ENCODE measurements at regions of chr1 and their contacts with region 1.

Region 1: GRCh38 chr1:9823943-9824701 is at the start of gene CLSTN1:
- DNase-seq: peak; percentile 84
- H3K4me3 Mint-ChIP-seq: peak within 1 kb of the TSS; percentile 91
- H3K27ac Mint-ChIP-seq: peak within 1 kb of the TSS; percentile 71
- H3K4me1 Mint-ChIP-seq: peaks cover 31% of the 10 kb centered on the region
- H3K27me3 Mint-ChIP-seq: no peaks in the 10 kb centered on the region
- CTCF ChIP-seq: no peak
- total RNA-seq, gene CLSTN1: 98.5 and 106 TPM in 2 replicates

Region 2: DNA sequence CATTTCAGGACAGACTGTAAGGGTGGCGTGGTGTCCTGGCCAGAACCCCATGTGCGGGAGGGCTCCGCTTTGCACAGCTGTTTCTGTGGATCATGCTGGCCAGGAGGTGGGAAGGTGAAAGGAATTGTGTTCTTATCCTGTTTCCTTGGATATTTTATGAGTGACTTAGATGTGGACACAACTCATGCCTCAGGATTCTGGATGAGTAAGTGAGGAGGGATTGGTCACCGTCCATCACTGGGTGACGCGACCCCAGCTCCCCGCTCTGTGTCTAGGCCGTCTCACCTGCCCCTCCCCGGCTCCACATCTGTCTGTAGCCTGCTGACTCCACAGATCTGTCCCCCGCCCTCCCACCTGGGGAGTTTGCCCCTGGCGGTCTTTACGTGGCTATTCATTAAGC is 123.8 kb before region 1 on chr1:
- CTCF ChIA-PET with region 1: no interaction called
- POLR2A ChIA-PET with region 1: no interaction called
- intact Hi-C with region 1: no loop called
- DNase-seq: peak; percentile 54
- H3K4me3 Mint-ChIP-seq: no peak overlapping the region
- H3K27ac Mint-ChIP-seq: peak overlapping the region; percentile 19
- H3K4me1 Mint-ChIP-seq: peaks cover 23% of the 10 kb centered on the region
- H3K27me3 Mint-ChIP-seq: no peaks in the 10 kb centered on the region
- CTCF ChIP-seq: no peak

Region 3: DNA sequence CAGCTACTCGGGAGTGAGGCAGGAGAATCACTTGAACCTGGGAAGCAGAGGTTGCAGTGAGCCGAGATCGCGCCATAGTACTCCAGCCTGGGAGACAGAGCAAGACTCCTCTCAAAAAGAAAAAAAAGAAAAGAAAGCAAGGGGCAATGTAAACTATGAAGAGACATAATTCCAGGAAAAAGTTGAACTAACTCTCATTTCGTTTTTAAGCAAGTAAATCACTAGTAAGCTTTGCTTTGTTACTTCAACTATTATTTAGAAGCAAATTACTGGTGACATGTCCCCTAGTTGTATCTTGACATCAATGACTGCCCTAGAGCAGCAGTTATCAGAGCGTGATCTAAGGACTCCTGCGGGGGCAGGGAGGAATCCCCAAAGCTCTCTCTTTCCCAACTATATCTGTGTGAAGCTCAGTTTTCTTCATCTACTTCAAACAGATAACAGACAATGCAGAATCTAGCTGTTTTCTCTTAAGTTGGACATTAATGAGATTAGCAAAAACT is 19.1 kb before region 1 on chr1:
- CTCF ChIA-PET with region 1: interaction called, 3 read pairs
- POLR2A ChIA-PET with region 1: interaction called, 41 read pairs
- intact Hi-C with region 1: no loop called
- DNase-seq: no peak
- H3K4me3 Mint-ChIP-seq: peak overlapping the region; percentile 16
- H3K27ac Mint-ChIP-seq: peak overlapping the region; percentile 89
- H3K4me1 Mint-ChIP-seq: peaks cover 23% of the 10 kb centered on the region
- H3K27me3 Mint-ChIP-seq: no peaks in the 10 kb centered on the region
- CTCF ChIP-seq: no peak

Region 4: GRCh38 chr1:9835758-9836450 is 11.8 kb after region 1 on chr1:
- CTCF ChIA-PET with region 1: interaction called, 5 read pairs
- POLR2A ChIA-PET with region 1: interaction called, 47 read pairs
- intact Hi-C with region 1: no loop called
- DNase-seq: peak; percentile 85
- H3K4me3 Mint-ChIP-seq: peak overlapping the region; percentile 58
- H3K27ac Mint-ChIP-seq: peak overlapping the region; percentile 91
- H3K4me1 Mint-ChIP-seq: peaks cover 31% of the 10 kb centered on the region
- H3K27me3 Mint-ChIP-seq: no peaks in the 10 kb centered on the region
- CTCF ChIP-seq: no peak

Region 5: GRCh38 chr1:9842781-9843577 is 18.9 kb after region 1 on chr1:
- CTCF ChIA-PET with region 1: no interaction called
- POLR2A ChIA-PET with region 1: interaction called, 12 read pairs
- intact Hi-C with region 1: no loop called
- DNase-seq: peak; percentile 44
- H3K4me3 Mint-ChIP-seq: no peak overlapping the region
- H3K27ac Mint-ChIP-seq: no peak overlapping the region
- H3K4me1 Mint-ChIP-seq: peaks cover 16% of the 10 kb centered on the region
- H3K27me3 Mint-ChIP-seq: no peaks in the 10 kb centered on the region
- CTCF ChIP-seq: no peak

Region 6: GRCh38 chr1:9867408-9868243 is 43.5 kb after region 1 on chr1:
- CTCF ChIA-PET with region 1: interaction called, 6 read pairs
- POLR2A ChIA-PET with region 1: interaction called, 4 read pairs
- intact Hi-C with region 1: loop called (anchors 2 kb)
- DNase-seq: peak; percentile 79
- H3K4me3 Mint-ChIP-seq: no peak overlapping the region
- H3K27ac Mint-ChIP-seq: no peak overlapping the region
- H3K4me1 Mint-ChIP-seq: peaks cover 7% of the 10 kb centered on the region
- H3K27me3 Mint-ChIP-seq: no peaks in the 10 kb centered on the region
- CTCF ChIP-seq: peak; percentile 93

Region 7: DNA sequence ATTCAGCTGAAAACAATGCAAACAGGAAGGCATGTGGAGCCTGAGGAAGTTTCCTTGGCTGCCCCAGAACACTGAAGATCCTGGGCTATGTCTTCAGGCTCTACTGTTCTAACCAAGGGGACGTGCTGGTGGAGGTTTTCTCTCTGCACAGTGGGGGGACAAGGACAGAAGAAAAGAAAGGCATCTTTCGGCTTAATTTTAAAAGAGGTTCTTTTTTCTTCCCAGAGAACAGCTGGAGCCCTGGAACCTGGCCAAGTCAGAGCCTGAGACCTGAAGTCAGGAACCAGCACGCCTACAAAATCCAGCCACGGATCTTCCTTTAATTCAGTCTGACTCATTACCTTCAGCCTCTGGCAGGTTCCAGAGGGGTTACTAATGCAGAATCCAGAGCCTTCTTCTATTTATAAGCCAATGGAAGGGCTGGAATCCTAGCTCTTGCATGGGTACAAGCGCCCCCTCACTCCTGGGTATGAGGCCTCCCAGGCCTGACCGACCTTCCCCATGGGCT is 66.2 kb after region 1 on chr1:
- CTCF ChIA-PET with region 1: interaction called, 5 read pairs
- POLR2A ChIA-PET with region 1: interaction called, 10 read pairs
- intact Hi-C with region 1: no loop called
- DNase-seq: peak; percentile 96
- H3K4me3 Mint-ChIP-seq: peak overlapping the region; percentile 59
- H3K27ac Mint-ChIP-seq: peak overlapping the region; percentile 81
- H3K4me1 Mint-ChIP-seq: peaks cover 42% of the 10 kb centered on the region
- H3K27me3 Mint-ChIP-seq: no peaks in the 10 kb centered on the region
- CTCF ChIP-seq: no peak

Region 8: DNA sequence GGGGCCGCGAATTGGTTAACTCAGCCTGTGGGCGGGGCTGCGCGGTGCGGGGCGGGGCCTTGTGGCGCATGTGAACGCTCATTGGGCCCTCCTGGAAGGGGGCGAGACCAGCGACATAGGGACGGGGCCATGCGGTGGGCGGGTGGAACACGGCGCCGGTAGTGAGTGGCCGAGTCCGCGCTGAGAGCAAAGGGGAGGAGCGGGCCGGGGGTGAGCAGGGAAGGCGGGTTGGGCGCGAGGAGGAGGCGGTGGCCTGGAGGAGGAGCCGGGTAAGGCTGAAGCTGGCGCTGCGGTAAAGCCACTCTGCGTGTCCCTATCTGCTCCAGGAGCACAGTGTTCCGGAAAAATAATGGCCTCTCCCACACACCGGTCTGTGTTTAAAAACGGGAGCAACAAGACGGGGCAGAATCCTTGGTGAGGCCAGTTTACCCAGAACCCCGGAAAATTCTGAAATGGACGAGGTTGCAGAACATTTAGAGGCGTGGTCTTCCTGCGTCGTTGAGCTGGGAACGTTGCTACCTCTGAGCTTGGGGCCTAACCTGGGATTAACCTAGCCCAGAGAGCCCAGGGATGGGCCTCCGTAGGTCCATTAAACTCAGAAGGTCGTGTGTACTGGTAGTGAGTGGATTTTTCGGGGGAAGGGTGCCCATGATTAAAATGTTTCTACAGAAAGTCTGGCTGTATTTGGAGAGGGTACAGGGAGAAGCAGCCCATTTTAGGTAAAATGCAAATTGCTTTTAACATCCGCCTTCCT is 86.5 kb after region 1 on chr1:
- CTCF ChIA-PET with region 1: interaction called, 3 read pairs
- POLR2A ChIA-PET with region 1: interaction called, 3 read pairs
- intact Hi-C with region 1: loop called (anchors 5 kb)
- DNase-seq: peak; percentile 99
- H3K4me3 Mint-ChIP-seq: peak overlapping the region; percentile 93
- H3K27ac Mint-ChIP-seq: peak overlapping the region; percentile 99
- H3K4me1 Mint-ChIP-seq: peaks cover 30% of the 10 kb centered on the region
- H3K27me3 Mint-ChIP-seq: no peaks in the 10 kb centered on the region
- CTCF ChIP-seq: no peak

Region 9: DNA sequence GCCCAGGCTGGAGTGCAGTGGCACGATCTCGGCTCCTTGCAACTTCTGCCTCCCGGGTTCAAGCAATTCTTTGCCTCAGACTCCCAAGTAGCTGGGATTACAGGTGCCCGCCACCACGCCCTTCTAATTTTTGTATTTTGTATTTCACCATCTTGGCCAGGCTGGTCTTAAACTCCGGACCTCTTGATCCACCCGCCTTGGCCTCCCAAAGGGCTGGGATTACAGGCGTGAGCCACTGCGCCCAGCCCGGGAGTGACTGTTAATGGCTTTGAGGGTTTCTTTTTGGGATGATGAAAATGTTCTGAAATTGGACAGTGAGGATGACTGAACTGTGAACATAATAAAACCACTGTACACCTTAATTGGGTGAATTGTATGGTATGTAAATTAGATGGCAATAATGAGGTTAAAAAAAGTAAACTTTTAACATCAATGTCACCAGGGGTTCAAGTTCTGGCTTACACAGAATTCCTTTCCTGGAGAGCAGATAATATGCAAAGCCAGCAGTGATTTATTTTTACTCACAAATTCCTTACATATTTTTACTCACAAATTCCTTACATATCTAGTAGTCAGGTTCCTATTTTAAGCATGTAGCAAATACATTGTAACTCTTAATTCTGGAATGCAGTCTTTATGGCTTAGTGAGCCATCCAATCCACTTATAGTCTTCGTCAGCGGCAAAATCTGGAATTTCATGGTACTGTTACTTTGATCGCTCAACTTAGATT is 207.2 kb after region 1 on chr1:
- CTCF ChIA-PET with region 1: no interaction called
- POLR2A ChIA-PET with region 1: no interaction called
- intact Hi-C with region 1: no loop called
- DNase-seq: no peak
- H3K4me3 Mint-ChIP-seq: no peak overlapping the region
- H3K27ac Mint-ChIP-seq: no peak overlapping the region
- H3K4me1 Mint-ChIP-seq: peaks cover 18% of the 10 kb centered on the region
- H3K27me3 Mint-ChIP-seq: no peaks in the 10 kb centered on the region
- CTCF ChIP-seq: no peak